ENCODE measurements at regions of chr6 and their contacts with region 1.

Region 1: DNA sequence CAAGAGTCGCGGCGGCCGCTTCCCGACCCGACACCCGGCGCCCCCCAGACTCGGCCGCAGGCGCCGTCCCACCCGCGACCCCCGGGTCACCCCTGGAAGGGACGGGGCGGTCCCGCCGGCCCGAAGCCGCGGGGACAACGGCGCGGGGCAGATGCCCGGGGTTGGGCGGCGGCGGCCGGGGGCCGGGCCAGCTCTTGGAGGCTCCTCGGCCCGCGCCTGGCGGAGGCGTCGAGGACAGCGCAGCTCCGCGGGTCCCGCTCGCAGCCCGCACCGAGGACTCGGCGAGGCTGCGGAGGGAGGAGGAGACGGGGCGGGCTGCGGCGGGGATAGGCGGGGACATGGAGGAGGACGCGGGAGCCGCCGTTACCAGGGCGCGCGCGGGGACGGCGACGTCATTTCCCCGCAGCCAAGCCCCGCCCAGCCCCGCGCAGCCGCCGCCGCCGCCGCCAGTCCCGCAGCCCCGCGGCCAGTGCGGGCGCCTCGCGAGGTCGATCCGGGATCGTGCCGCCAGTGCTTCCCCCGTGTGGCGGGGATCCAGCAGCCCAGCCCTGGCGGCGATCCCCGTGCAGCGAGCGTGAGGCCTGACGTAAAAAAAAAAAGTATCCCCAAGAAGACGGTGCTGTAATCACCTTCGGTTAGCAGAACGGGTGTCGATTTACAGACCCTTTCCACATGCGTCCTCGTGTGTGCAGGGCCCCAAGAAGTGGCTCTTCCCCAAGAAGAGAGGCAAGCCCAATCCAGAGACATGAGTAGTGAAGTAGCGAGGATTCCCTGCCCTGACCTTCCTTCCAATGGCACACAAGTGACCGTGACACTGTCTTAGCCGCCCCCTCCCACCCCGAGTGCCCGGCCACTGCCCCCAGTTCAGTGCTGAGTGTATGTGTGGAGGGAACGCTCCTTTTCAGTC is at the start of gene FAM184A:
- DNase-seq: peak; percentile 74 to 86 (median 82)
- ATAC-seq: peak; percentile 79
- H3K4me3 ChIP-seq: peak within 1 kb of the TSS; percentile 77
- H3K4me3 Mint-ChIP-seq: peak within 1 kb of the TSS; percentile 75 to 97 (median 94)
- H3K27ac ChIP-seq: peak within 1 kb of the TSS; percentile 74
- H3K27ac Mint-ChIP-seq: peak within 1 kb of the TSS; percentile 66 to 97 (median 95)
- H3K4me1 ChIP-seq: peaks cover 5 to 25% of the 10 kb centered on the region in 2 donors
- H3K4me1 Mint-ChIP-seq: peaks cover 14 to 50% (median 39%) of the 10 kb centered on the region in 7 donors
- H3K27me3 ChIP-seq: no peaks in the 10 kb centered on the region
- H3K27me3 Mint-ChIP-seq: peaks cover 0 to 9% (median 0%) of the 10 kb centered on the region in 5 donors
- total RNA-seq, gene FAM184A: 5.3 to 9.8 (median 7.9) TPM

Region 2: DNA sequence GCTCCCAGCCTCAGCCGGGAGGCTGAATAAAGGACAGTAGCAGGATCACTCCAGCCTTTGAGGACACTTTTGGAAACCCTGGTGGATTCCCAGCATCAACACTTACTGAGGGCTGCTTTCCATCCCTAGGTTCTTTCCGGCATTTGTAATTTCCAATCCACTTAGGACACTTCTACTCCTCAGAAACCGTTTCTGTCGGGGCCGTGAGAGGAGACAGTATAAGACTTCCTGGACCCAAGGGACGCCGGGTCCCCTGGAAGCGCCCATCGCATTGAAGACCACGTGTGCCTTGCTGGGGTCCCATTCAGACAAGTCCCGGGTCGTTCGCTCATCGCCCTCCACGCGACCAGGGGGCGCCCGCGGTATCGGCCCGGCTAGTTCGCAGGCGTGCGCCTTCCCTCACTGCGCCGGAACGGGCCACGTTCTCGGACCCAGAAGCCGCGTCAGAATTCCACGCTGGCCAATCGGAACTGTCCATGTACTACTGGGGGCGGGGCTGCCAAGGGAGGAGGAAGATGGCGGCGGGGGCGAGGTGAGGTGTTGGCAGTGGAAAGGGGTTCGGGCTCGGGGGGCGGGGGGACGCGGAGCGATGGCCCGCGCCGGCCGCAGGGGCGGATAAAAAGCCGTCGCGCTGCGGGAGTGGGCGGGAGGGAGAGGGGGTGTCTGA is 1403.5 kb before region 1 on chr6 and contains the start of gene NUS1:
- CTCF ChIA-PET with region 1: no interaction called
- POLR2A ChIA-PET with region 1: no interaction called
- intact Hi-C with region 1: loop called in 1 of 2 experiments (anchors 1 kb)
- DNase-seq: peak; percentile 92 to 98 (median 96)
- ATAC-seq: peak; percentile 98
- H3K4me3 ChIP-seq: peak within 1 kb of the TSS; percentile 95
- H3K4me3 Mint-ChIP-seq: peak within 1 kb of the TSS; percentile 85 to 98 (median 94)
- H3K27ac ChIP-seq: peak within 1 kb of the TSS; percentile 74
- H3K27ac Mint-ChIP-seq: peak within 1 kb of the TSS; percentile 81 to 98 (median 91)
- H3K4me1 ChIP-seq: peaks cover 24 to 28% of the 10 kb centered on the region in 2 donors
- H3K4me1 Mint-ChIP-seq: peaks cover 37 to 57% (median 53%) of the 10 kb centered on the region in 7 donors
- H3K27me3 ChIP-seq: no peaks in the 10 kb centered on the region
- H3K27me3 Mint-ChIP-seq: peaks cover 0 to 2% (median 0%) of the 10 kb centered on the region in 5 donors
- total RNA-seq, gene NUS1: 19.6 to 37.6 (median 33.2) TPM

Region 3: GRCh38 chr6:118800394-118801071 is 278.1 kb before region 1 on chr6:
- CTCF ChIA-PET with region 1: no interaction called
- POLR2A ChIA-PET with region 1: no interaction called
- intact Hi-C with region 1: loop called in 1 of 2 experiments (anchors 10 kb)
- DNase-seq: peak; percentile 45 to 90 (median 86)
- ATAC-seq: peak; percentile 95
- H3K4me3 ChIP-seq: peak overlapping the region; percentile 22
- H3K4me3 Mint-ChIP-seq: peak overlapping the region; percentile 14 to 88 (median 68)
- H3K27ac ChIP-seq: no peak overlapping the region
- H3K27ac Mint-ChIP-seq: peak overlapping the region; percentile 73 to 93 (median 86)
- H3K4me1 ChIP-seq: peaks cover 17 to 25% of the 10 kb centered on the region in 2 donors
- H3K4me1 Mint-ChIP-seq: peaks cover 17 to 51% (median 37%) of the 10 kb centered on the region in 7 donors
- H3K27me3 ChIP-seq: no peaks in the 10 kb centered on the region
- H3K27me3 Mint-ChIP-seq: no peaks in the 10 kb centered on the region

Region 4: DNA sequence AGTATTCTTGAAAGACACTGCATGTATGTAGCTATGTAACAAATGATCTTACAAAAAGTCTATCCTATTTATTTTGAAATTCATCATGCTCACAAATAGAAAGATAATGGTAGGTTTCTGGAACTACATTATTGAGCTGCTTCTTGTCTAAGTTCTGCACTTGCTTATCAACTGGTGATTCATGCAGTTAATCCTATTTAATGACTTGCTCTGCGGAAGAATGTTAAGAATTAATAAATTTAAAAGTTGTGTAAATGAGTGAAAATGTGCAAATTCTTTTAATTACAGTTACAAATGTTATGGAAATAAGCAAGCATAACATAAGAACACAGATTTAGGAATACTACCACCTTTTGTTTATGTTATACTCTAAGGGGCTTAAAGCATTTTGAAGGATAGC is 76.6 kb before region 1 on chr6:
- CTCF ChIA-PET with region 1: no interaction called
- POLR2A ChIA-PET with region 1: no interaction called
- intact Hi-C with region 1: no loop called
- DNase-seq: no peak
- ATAC-seq: no peak
- H3K4me3 ChIP-seq: no peak overlapping the region
- H3K4me3 Mint-ChIP-seq: no peak overlapping the region
- H3K27ac ChIP-seq: no peak overlapping the region
- H3K27ac Mint-ChIP-seq: no peak overlapping the region
- H3K4me1 ChIP-seq: no peaks in the 10 kb centered on the region
- H3K4me1 Mint-ChIP-seq: peaks cover 4 to 15% (median 13%) of the 10 kb centered on the region in 7 donors
- H3K27me3 ChIP-seq: no peaks in the 10 kb centered on the region
- H3K27me3 Mint-ChIP-seq: no peaks in the 10 kb centered on the region

Region 5: GRCh38 chr6:119012521-119012920 is 66.1 kb before region 1 on chr6:
- CTCF ChIA-PET with region 1: no interaction called
- POLR2A ChIA-PET with region 1: no interaction called
- intact Hi-C with region 1: loop called in 1 of 2 experiments (anchors 5 kb)
- DNase-seq: no peak
- ATAC-seq: no peak
- H3K4me3 ChIP-seq: no peak overlapping the region
- H3K4me3 Mint-ChIP-seq: no peak overlapping the region
- H3K27ac ChIP-seq: no peak overlapping the region
- H3K27ac Mint-ChIP-seq: no peak overlapping the region
- H3K4me1 ChIP-seq: no peaks in the 10 kb centered on the region
- H3K4me1 Mint-ChIP-seq: peaks cover 0 to 1% (median 0%) of the 10 kb centered on the region in 7 donors
- H3K27me3 ChIP-seq: no peaks in the 10 kb centered on the region
- H3K27me3 Mint-ChIP-seq: no peaks in the 10 kb centered on the region

Region 6: DNA sequence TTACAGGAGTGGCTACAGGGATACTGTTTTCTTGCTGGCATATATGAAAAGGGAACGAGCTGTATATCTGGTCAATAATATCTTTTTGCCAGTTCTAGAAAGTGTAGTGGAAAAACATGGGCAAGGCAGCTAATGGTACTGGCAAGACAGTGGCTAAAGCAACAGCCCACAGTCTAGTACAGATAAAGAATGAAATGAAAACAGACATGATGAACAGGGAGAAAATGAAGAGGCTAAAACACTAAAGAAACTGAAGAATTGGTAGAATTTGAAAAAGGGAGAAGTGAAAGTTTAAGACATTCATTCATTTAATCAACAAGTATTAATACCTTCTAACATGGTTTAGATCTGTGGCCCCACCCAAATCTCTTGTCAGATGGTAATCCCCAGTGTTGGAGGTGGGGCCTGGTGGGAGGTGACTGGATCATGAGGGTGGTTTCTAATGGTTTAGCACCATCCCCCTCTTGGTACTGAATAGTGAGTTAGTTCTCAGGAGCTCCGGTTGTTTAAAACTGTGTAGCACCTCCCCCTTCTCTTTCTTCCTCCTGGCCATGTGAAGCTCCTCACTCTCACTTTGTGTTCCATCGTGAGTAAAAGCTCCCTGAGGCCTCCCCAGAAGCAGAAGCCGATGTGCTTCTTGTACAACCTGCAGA is 18.2 kb before region 1 on chr6:
- CTCF ChIA-PET with region 1: no interaction called
- POLR2A ChIA-PET with region 1: interaction called, 3 read pairs
- intact Hi-C with region 1: loop called (anchors 2 kb)
- DNase-seq: no peak
- ATAC-seq: no peak
- H3K4me3 ChIP-seq: no peak overlapping the region
- H3K4me3 Mint-ChIP-seq: no peak overlapping the region
- H3K27ac ChIP-seq: no peak overlapping the region
- H3K27ac Mint-ChIP-seq: no peak overlapping the region
- H3K4me1 ChIP-seq: no peaks in the 10 kb centered on the region
- H3K4me1 Mint-ChIP-seq: peaks cover 0 to 11% (median 10%) of the 10 kb centered on the region in 7 donors
- H3K27me3 ChIP-seq: no peaks in the 10 kb centered on the region
- H3K27me3 Mint-ChIP-seq: no peaks in the 10 kb centered on the region

Region 7: DNA sequence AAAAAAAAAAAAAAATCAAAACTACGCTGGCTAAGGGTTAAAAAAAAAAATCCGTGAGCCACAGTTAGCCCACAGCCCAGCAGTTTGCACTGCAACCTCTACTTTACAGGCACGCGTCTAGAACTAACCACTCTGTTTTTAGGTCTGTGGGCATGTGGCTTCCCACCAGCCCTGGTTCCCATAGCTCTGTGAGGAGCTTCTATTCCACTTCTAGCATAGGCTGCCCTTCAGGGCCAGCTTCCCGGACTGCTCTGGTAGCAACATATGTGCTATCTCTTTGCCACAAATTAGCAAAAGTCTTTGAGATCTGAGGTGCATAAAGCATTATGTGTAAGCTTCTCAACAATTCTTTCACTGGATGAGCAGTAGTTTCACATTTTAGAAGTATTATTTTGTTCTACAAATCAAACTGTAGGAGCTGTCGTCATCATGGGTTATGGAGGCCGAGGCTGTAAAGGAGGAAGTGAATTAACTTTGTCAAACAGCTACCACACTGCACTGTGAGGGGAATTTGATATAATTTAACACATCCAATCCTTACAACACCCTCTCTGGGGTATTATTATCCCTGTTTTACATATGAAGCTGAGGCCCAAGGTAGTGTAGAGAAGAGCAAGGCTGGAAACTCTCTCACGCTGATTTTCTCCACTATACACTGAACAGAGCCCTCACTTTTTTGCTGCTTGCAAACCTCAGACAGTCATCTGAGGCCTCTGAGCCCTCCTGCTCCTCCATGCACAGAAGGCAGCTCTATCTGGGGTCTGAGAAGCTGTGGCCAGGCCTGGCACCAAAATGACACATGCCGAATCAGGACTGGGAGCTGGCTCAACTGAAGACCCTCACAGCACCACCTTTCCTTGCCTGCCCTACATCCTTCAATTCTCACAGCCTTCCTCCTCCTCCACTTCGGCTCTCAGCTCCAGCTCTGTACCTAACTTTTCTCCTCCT is 235.6 kb after region 1 on chr6:
- CTCF ChIA-PET with region 1: no interaction called
- POLR2A ChIA-PET with region 1: no interaction called
- intact Hi-C with region 1: loop called in 1 of 2 experiments (anchors 10 kb)
- DNase-seq: peak in 7 of 9 donors; percentile 17 to 49 (median 38)
- ATAC-seq: peak; percentile 72
- H3K4me3 ChIP-seq: peak overlapping the region; percentile 22
- H3K4me3 Mint-ChIP-seq: peak overlapping the region; percentile 57 to 83 (median 73)
- H3K27ac ChIP-seq: peak overlapping the region; percentile 40
- H3K27ac Mint-ChIP-seq: peak overlapping the region; percentile 68 to 97 (median 85)
- H3K4me1 ChIP-seq: peaks cover 27 to 43% of the 10 kb centered on the region in 2 donors
- H3K4me1 Mint-ChIP-seq: peaks cover 27 to 69% (median 39%) of the 10 kb centered on the region in 7 donors
- H3K27me3 ChIP-seq: no peaks in the 10 kb centered on the region
- H3K27me3 Mint-ChIP-seq: no peaks in the 10 kb centered on the region